Adrenal gland (tissue), 19 donors: ENCODE measurements at regions of chr9 and their contacts with region 1.

Region 1: DNA sequence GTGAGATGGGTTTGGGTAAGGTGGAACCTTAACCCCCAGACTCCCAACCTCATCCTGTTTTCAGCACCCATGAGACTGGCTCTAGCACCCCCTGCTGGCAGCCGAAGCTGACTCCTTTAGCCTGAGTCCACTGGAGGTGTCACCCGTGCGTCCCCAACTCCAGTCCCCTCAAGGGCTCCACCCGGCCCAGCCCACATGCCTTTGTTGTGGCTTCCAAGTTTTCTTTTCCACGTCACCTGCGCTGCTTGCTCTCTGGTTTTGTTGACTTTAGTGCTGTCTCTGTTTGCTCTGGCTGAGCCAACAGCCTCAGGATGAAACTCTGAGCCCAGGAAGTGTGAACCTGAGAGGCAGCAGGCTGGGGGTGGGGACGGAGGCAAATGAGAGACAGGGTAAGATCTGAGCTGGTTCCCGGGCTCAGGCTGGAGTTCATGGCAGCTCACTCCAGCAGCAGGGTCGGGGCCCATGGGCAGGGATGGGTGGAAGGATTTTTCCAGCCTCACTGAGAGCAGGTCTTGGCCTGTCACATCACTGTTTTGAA is 13.2 kb upstream of the AQP7 start:
- DNase-seq: peak; percentile 72 to 87 (median 80)
- H3K4me3 ChIP-seq: no peak overlapping the region
- H3K27ac ChIP-seq: no peak overlapping the region
- H3K4me1 ChIP-seq: no peaks in the 10 kb centered on the region
- H3K27me3 ChIP-seq: no peaks in the 10 kb centered on the region
- CTCF ChIP-seq: peak; percentile 42 to 79 (median 73)
- POLR2A ChIP-seq: no peak

Region 2: GRCh38 chr9:33167046-33167808 is 248.3 kb before region 1 on chr9 and contains the start of gene B4GALT1:
- intact Hi-C with region 1: no loop called
- DNase-seq: peak; percentile 94 to 98 (median 96)
- H3K4me3 ChIP-seq: peak within 1 kb of the TSS; percentile 56 to 99 (median 84)
- H3K27ac ChIP-seq: peak within 1 kb of the TSS; percentile 82 to 99 (median 96)
- H3K4me1 ChIP-seq: peaks cover 44 to 61% of the 10 kb centered on the region in 2 donors
- H3K27me3 ChIP-seq: no peaks in the 10 kb centered on the region
- CTCF ChIP-seq: peak in 1 of 6 experiments; percentile 21
- POLR2A ChIP-seq: peak; percentile 84 to 89
- total RNA-seq, gene B4GALT1: 23.8 to 117 (median 67.6) TPM

Region 3: DNA sequence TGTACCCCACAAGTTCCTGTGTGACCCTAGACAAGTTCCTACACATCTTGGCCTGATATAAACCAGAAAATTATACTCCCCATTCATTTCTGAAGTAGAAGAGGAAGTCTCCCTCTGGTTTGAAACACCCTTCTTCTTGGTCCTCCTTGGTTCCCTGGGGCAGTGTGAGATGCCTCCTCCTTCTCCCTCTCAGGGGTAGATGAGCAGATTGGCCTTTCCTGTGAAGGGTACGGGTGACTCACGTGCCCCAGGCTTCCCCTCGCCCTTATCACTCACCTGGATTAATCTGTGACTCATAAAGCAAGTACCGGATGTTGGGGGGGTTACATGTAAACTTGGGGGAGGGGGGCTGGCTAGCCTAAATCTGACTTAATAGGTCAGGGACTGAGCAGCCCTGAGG is 42.9 kb after region 1 on chr9:
- intact Hi-C with region 1: loop called in 1 of 2 experiments (anchors 5 kb)
- DNase-seq: no peak
- H3K4me3 ChIP-seq: no peak overlapping the region
- H3K27ac ChIP-seq: no peak overlapping the region
- H3K4me1 ChIP-seq: no peaks in the 10 kb centered on the region
- H3K27me3 ChIP-seq: no peaks in the 10 kb centered on the region
- CTCF ChIP-seq: no peak
- POLR2A ChIP-seq: no peak